ENCODE measurements at regions of chr4 and their contacts with region 1.

Region 1: GRCh38 chr4:128809477-128810330 is at the start of gene JADE1:
- DNase-seq: peak; percentile 89 to 94 (median 90)
- H3K4me3 ChIP-seq: peak within 1 kb of the TSS; percentile 87
- H3K27ac ChIP-seq: peak within 1 kb of the TSS; percentile 54 to 72
- H3K4me1 ChIP-seq: no peaks in the 10 kb centered on the region
- H3K27me3 ChIP-seq: no peaks in the 10 kb centered on the region
- CTCF ChIP-seq: peak; percentile 34 to 80 (median 66)
- EP300 ChIP-seq: no peak
- POLR2A ChIP-seq: peak; percentile 59
- total RNA-seq, gene JADE1: 27.3 to 48.6 (median 37.5) TPM

Region 2: GRCh38 chr4:128454281-128455075 is 355.2 kb before region 1 on chr4:
- intact Hi-C with region 1: loop called in 1 of 4 experiments (anchors 10 kb)
- DNase-seq: peak; percentile 83 to 93 (median 84)
- H3K4me3 ChIP-seq: no peak overlapping the region
- H3K27ac ChIP-seq: no peak overlapping the region
- H3K4me1 ChIP-seq: no peaks in the 10 kb centered on the region
- H3K27me3 ChIP-seq: no peaks in the 10 kb centered on the region
- CTCF ChIP-seq: peak; percentile 56 to 83 (median 80)
- EP300 ChIP-seq: no peak
- POLR2A ChIP-seq: no peak

Region 3: GRCh38 chr4:128565565-128566186 is 244.0 kb before region 1 on chr4:
- intact Hi-C with region 1: loop called in 2 of 4 experiments (anchors 5 kb)
- DNase-seq: peak; percentile 49 to 70 (median 65)
- H3K4me3 ChIP-seq: no peak overlapping the region
- H3K27ac ChIP-seq: no peak overlapping the region
- H3K4me1 ChIP-seq: peaks cover 5% of the 10 kb centered on the region
- H3K27me3 ChIP-seq: no peaks in the 10 kb centered on the region
- CTCF ChIP-seq: peak in 2 of 3 donors; percentile 43 to 48
- EP300 ChIP-seq: no peak
- POLR2A ChIP-seq: no peak

Region 4: GRCh38 chr4:128663336-128663735 is 146.4 kb before region 1 on chr4:
- intact Hi-C with region 1: loop called in 2 of 4 experiments (anchors 5 to 10 kb)
- DNase-seq: no peak
- H3K4me3 ChIP-seq: no peak overlapping the region
- H3K27ac ChIP-seq: no peak overlapping the region
- H3K4me1 ChIP-seq: peaks cover 15% of the 10 kb centered on the region
- H3K27me3 ChIP-seq: no peaks in the 10 kb centered on the region
- CTCF ChIP-seq: no peak
- EP300 ChIP-seq: no peak
- POLR2A ChIP-seq: no peak

Measured in ovary (tissue), 10 donors.